ENCODE measurements at regions of chr14 and their contacts with region 1.

Region 1: GRCh38 chr14:90383075-90383730 is 13.6 kb upstream of the CALM1 start:
- DNase-seq: peak; percentile 99 to 100
- ATAC-seq: peak; percentile 93 to 97 (median 97)
- H3K4me3 ChIP-seq: peak overlapping the region; percentile 44 to 75 (median 66)
- H3K27ac ChIP-seq: peak overlapping the region; percentile 95 to 100 (median 99)
- H3K4me1 ChIP-seq: peaks cover 6 to 49% (median 34%) of the 10 kb centered on the region in 9 donors
- H3K27me3 ChIP-seq: no peaks in the 10 kb centered on the region
- CTCF ChIP-seq: peak in 5 of 9 donors; percentile 8 to 33 (median 22)

Region 2: DNA sequence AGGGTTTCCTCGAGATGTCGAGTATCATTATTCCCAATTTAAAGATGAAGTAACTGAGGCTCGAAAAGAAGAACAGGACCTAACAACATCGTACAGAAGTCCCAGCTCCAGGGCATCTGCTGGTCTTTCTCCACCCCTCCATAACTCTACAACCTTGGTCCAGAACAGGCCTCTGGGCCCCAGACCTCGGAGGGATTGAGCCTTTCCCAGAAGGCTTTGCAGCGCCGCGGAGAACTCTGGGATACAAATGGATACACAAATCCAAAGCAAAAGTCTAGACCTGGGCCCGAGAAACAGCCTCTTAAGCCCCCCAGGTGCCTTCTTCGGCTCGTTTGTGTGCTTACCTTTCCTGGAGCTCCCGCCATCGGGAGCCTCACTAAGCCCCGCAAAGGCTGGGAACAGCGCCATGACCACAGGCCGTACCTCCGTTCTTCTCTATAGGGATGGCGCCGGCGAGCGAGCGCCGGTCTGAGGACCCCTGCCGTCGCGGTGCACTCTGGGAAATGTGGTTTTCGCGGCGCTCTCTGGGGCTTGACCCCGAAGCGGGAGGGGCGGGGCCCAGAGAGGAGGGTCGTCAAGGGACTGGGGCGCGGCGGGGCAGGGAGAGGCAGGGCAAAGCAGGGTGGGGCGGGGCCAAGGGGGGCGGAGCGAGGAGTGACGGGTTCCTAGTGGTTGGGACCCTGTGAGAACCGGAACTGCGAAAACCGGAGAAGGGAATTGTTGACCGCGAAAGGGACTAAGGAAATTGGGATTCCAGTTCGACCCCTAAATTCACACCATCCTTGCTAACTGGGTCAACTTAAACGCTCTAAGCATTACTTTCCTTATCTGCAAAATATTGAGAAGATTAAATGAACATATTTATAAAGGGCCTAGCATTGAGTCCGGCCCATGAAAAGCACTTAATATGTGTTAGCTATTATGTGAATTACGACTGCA is 51.4 kb before region 1 on chr14 and contains the start of gene NRDE2:
- intact Hi-C with region 1: loop called in 9 of 10 experiments (anchors 1 to 5 kb)
- DNase-seq: peak; percentile 100
- ATAC-seq: peak; percentile 99 to 100 (median 100)
- H3K4me3 ChIP-seq: peak within 1 kb of the TSS; percentile 62 to 80 (median 72)
- H3K27ac ChIP-seq: peak within 1 kb of the TSS; percentile 73 to 92 (median 87)
- H3K4me1 ChIP-seq: peaks cover 0 to 16% (median 11%) of the 10 kb centered on the region in 9 donors
- H3K27me3 ChIP-seq: peaks cover 0 to 15% (median 0%) of the 10 kb centered on the region in 7 donors
- CTCF ChIP-seq: peak in 1 of 9 donors; percentile 15
- total RNA-seq, gene NRDE2: 11.2 to 16.7 (median 13.5) TPM

Region 3: GRCh38 chr14:90483571-90483974 is 100.4 kb after region 1 on chr14:
- intact Hi-C with region 1: no loop called
- DNase-seq: peak in 1 of 2 donors; percentile 31
- ATAC-seq: peak; percentile 55 to 92 (median 77)
- H3K4me3 ChIP-seq: no peak overlapping the region
- H3K27ac ChIP-seq: peak overlapping the region in 6 of 10 donors; percentile 26 to 83 (median 67)
- H3K4me1 ChIP-seq: peaks cover 0 to 33% (median 9%) of the 10 kb centered on the region in 9 donors
- H3K27me3 ChIP-seq: no peaks in the 10 kb centered on the region
- CTCF ChIP-seq: no peak